ENCODE measurements at regions of chr2 and their contacts with region 1.

Region 1: DNA sequence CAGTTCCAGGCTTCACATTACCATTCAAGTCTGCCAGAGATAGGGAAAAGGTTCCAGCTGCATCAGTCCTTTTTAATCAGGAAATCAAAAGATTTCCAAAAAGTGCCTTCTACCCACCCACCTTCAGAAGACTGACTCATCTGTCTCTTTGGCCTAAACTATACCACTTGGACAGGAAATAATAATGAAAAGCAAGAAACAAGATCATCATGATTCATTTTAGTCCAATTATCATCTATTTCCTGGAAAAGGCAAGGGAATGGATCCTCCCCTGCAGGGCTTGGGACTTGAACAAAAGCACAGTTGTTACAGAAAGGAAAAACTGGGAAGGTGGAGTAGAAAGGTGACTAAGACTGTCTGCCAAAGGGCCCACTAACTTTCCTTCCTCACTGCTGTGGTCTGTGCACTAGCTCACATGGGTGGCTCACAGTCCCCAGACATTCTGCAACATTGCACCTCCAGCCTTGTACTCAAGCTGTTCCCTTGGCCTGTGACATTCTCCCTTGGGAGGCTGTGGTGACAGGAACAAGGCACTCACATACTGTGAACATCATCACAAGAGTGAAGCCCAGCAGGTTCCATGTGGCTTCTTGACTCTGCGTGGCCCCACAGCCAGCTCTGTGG is 75.3 kb downstream of the VSNL1 start:
- DNase-seq: no peak
- H3K4me3 ChIP-seq: no peak overlapping the region
- H3K27ac ChIP-seq: no peak overlapping the region
- H3K4me1 ChIP-seq: peaks cover 0 to 9% (median 5%) of the 10 kb centered on the region in 4 experiments; a peak in 6 of 7 replicates
- H3K27me3 ChIP-seq: no peaks in the 10 kb centered on the region
- CTCF ChIP-seq: no peak
- EP300 ChIP-seq: no peak
- POLR2A ChIP-seq: no peak
- RAD21 ChIP-seq: no peak

Region 2: DNA sequence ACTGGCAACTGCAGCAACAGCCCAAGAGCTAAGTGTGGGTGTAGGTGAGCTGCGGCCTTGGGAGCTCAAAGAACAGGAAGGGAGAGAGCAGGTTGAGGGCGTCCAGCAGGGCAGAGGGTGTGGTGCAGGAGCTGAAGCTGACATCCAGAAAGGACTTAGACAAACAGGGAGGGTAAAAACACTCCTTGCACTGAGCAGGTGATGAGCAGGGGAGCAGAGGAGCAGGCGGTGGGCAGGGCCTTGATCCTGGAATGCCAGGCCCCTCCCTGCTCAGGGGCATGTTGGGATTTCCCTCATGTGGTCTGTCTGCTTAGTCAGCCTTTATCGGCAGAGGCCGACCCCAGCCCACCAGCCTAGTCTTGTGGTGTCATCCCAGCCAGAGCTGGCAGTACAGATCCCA is 11.8 kb before region 1 on chr2:
- CTCF ChIA-PET with region 1: interaction called, 19 read pairs
- POLR2A ChIA-PET with region 1: no interaction called
- DNase-seq: no peak
- H3K4me3 ChIP-seq: no peak overlapping the region
- H3K27ac ChIP-seq: no peak overlapping the region
- H3K4me1 ChIP-seq: peaks cover 3 to 10% (median 5%) of the 10 kb centered on the region in 4 experiments; a peak in 4 of 7 replicates
- H3K27me3 ChIP-seq: no peaks in the 10 kb centered on the region
- CTCF ChIP-seq: no peak
- EP300 ChIP-seq: no peak
- POLR2A ChIP-seq: no peak
- RAD21 ChIP-seq: no peak